ENCODE measurements at regions of chr5 and their contacts with region 1.

Region 1: GRCh38 chr5:141701360-141702119 is 19.5 kb upstream of the ARAP3 start:
- DNase-seq: no peak
- ATAC-seq: no peak
- H3K4me3 ChIP-seq: peak overlapping the region; percentile 81; the same call in 1 of the 2 replicates
- H3K27ac ChIP-seq: no peak overlapping the region
- H3K4me1 ChIP-seq: peaks cover 18% of the 10 kb centered on the region
- H3K27me3 ChIP-seq: no peaks in the 10 kb centered on the region
- CTCF ChIP-seq: no peak

Region 2: DNA sequence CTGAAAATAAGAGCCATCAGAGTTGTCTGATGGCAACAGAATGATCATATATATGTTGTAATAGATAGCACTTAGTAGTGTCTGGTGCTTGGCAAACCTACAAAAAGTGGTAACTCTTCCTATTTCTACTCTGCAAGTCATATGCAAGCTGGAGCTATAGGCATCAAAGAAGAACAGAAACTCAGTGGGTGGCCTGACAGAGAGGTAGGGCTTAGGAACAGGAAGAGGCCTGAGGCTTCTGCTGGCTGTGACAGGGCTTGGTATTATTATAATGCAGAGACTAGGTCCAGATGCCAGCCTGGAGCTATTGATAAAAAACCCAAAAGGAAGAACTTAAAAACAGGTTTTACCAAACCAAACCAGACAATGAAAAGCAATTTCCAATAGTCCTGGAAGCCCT is 78.4 kb before region 1 on chr5:
- CTCF ChIA-PET with region 1: no interaction called
- POLR2A ChIA-PET with region 1: no interaction called
- intact Hi-C with region 1: no loop called
- DNase-seq: no peak
- ATAC-seq: no peak
- H3K4me3 ChIP-seq: no peak overlapping the region
- H3K27ac ChIP-seq: no peak overlapping the region
- H3K4me1 ChIP-seq: no peaks in the 10 kb centered on the region
- H3K27me3 ChIP-seq: no peaks in the 10 kb centered on the region
- CTCF ChIP-seq: no peak

Region 3: DNA sequence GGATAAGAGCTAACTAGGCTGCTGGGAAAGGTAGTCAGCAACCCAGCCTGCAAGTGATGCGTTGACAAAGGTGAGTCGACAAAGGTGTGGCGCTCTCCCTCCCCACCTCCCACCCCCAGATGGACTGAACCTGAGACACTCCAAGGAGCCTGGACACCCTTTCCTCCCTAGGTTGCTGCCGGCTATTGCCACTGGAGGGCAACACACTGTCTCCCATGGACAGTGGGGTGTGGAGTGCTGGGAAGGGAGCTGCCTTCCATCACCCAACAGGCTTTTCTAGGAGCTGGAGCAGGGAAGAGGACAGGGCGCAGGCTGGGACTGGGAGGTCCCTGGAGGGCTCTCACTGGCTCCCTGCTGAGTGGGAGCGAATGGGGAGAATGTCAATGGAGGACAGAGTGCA is 55.9 kb after region 1 on chr5:
- CTCF ChIA-PET with region 1: no interaction called
- POLR2A ChIA-PET with region 1: no interaction called
- intact Hi-C with region 1: loop called (anchors 5 kb)
- DNase-seq: peak; percentile 67
- ATAC-seq: peak; percentile 81
- H3K4me3 ChIP-seq: no peak overlapping the region
- H3K27ac ChIP-seq: no peak overlapping the region
- H3K4me1 ChIP-seq: peaks cover 6% of the 10 kb centered on the region; the same call in 1 of the 2 replicates
- H3K27me3 ChIP-seq: peaks cover 6% of the 10 kb centered on the region; the same call in 1 of the 2 replicates
- CTCF ChIP-seq: peak; percentile 58

Region 4: GRCh38 chr5:141811287-141812155 is 110.0 kb after region 1 on chr5:
- CTCF ChIA-PET with region 1: no interaction called
- POLR2A ChIA-PET with region 1: no interaction called
- intact Hi-C with region 1: loop called (anchors 5 kb)
- DNase-seq: no peak
- ATAC-seq: no peak
- H3K4me3 ChIP-seq: no peak overlapping the region
- H3K27ac ChIP-seq: no peak overlapping the region
- H3K4me1 ChIP-seq: no peaks in the 10 kb centered on the region
- H3K27me3 ChIP-seq: no peaks in the 10 kb centered on the region
- CTCF ChIP-seq: peak; percentile 60

Region 5: GRCh38 chr5:141858084-141858765 is 156.7 kb after region 1 on chr5:
- CTCF ChIA-PET with region 1: no interaction called
- POLR2A ChIA-PET with region 1: no interaction called
- intact Hi-C with region 1: no loop called
- DNase-seq: no peak
- ATAC-seq: no peak
- H3K4me3 ChIP-seq: no peak overlapping the region
- H3K27ac ChIP-seq: no peak overlapping the region
- H3K4me1 ChIP-seq: no peaks in the 10 kb centered on the region
- H3K27me3 ChIP-seq: no peaks in the 10 kb centered on the region
- CTCF ChIP-seq: no peak

Region 6: DNA sequence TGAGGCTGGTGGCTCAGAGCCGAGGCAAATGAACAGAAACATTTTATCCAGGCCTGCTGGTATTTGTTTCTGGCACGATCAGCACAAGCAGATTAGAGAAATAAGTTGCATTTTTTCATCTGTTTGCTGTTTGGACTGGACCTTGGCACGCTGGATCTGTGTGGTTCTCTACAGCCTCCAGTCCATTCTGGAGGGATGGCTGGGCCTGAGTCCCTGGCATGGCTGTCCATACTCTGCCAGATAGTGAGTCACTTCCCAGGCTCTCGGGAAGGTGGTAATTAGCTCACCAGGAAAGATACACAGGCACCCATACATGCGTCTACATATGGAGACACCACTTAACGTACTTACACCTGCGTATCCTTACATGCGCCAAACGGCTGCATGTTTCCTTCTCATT is 544.7 kb after region 1 on chr5:
- CTCF ChIA-PET with region 1: no interaction called
- POLR2A ChIA-PET with region 1: interaction called, 11 read pairs
- intact Hi-C with region 1: no loop called
- DNase-seq: peak; percentile 32
- ATAC-seq: peak; percentile 57
- H3K4me3 ChIP-seq: no peak overlapping the region
- H3K27ac ChIP-seq: no peak overlapping the region
- H3K4me1 ChIP-seq: peaks cover 34% of the 10 kb centered on the region
- H3K27me3 ChIP-seq: no peaks in the 10 kb centered on the region
- CTCF ChIP-seq: no peak

Region 7: DNA sequence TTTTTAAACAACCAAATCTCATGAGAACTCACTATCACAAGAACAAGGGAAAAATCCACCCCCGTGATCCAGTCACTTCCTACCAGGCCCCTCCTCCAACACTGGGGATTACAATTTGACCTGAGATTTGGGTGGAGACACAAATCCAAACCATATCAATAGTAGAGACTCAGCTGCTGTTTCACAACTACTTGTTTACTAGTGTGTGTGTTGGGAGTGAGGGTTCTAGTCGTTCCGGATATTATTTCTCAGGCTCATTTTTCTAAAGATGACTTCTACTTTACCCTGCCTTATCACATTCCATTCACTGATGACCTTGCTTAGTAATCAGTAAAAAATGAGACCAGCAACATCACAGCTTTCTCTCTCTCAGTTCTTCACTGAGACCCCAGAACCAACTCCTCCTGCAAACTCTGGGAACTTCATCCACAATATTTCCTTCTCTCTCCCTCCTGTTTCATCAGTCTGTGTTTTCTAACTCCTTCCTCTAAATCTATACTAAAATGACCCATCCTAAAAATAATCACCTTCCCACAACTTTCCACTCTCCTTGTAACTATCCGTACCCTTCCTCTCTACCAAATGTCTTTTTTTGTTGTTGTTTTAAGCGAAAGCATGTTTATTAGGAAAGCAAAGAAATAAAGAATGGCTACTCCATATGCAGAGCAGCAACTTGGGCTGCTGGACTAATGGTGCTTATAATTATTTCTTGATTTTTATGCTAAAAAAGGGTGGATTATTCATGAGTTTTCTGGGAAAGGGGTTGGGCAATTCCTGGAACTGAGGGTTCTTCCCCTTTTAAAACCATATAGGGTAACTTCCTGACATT is 744.8 kb after region 1 on chr5:
- CTCF ChIA-PET with region 1: no interaction called
- POLR2A ChIA-PET with region 1: interaction called, 11 read pairs
- intact Hi-C with region 1: no loop called
- DNase-seq: no peak
- ATAC-seq: no peak
- H3K4me3 ChIP-seq: no peak overlapping the region
- H3K27ac ChIP-seq: no peak overlapping the region
- H3K4me1 ChIP-seq: no peaks in the 10 kb centered on the region
- H3K27me3 ChIP-seq: no peaks in the 10 kb centered on the region
- CTCF ChIP-seq: no peak